ENCODE measurements at regions of chr16 and their contacts with region 1.

Region 1: GRCh38 chr16:17343028-17343427 is 127.7 kb downstream of the XYLT1 start:
- DNase-seq: peak; percentile 89
- H3K4me3 Mint-ChIP-seq: peak overlapping the region; percentile 79
- H3K27ac Mint-ChIP-seq: peak overlapping the region; percentile 91
- H3K4me1 Mint-ChIP-seq: peaks cover 72% of the 10 kb centered on the region
- H3K27me3 Mint-ChIP-seq: no peaks in the 10 kb centered on the region

Region 2: DNA sequence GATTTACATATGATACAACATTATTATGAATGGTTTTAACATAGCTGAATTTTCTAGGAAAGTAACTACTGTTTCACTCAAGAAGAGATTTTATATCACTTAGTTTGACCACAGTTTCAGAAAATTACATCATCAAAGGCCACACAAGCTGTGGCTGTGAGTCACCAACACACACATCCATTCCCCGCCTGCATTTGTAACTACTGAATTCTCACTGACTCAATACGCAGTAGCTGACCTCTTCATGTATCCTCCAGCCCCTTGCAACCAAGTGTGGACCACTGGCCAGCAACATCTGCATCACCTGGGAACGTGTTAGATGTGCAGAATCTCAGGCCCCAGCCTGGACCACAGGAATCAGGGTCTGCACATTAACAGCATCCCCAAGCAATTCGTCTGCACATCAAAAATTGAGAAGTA is 69.9 kb before region 1 on chr16:
- intact Hi-C with region 1: loop called (anchors 5 kb)
- DNase-seq: peak; percentile 74
- H3K4me3 Mint-ChIP-seq: peak overlapping the region; percentile 68
- H3K27ac Mint-ChIP-seq: peak overlapping the region; percentile 71
- H3K4me1 Mint-ChIP-seq: peaks cover 44% of the 10 kb centered on the region
- H3K27me3 Mint-ChIP-seq: peaks cover 5% of the 10 kb centered on the region

Region 3: DNA sequence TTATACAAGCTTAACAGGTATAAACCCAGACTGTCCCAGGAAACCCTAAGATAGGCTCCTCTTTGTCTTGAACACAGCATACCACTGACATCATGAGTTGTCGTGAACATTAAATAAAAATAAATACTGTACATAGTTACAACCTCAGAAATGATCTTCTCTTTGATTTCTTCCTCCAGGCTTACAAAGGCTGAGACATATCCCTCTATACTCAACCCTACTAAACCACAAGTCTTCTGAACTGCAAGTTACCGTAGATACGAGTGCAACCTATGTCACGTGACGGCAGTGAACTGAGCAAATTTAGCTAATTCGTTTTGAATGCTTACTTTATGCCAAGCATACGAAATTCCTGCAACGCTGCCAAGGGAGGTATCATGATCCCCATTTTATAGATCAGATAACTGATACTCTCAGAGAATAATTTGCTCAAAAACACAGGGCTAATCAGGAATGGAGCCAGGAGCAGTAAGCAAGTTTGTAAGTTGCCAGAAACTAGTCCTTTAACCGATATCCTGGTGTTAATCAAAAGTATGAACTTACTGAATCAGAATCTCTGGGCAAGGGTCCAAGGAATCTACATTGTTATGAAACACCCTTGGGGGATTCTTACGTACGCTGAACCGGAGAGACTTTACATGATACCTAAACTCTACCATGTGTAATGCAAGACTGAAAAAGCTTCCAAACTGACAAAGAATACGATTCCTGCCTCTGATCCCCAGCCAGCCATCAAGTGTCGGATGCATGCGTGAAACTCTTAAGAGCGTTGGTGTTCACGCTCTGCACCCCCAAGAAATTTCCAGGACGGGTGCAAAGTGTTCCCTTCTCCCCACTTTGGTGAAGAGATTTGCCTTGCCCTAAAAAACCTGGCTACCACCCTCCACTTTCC is 21.5 kb after region 1 on chr16:
- intact Hi-C with region 1: loop called (anchors 1 kb)
- DNase-seq: peak; percentile 91
- H3K4me3 Mint-ChIP-seq: peak overlapping the region; percentile 64
- H3K27ac Mint-ChIP-seq: peak overlapping the region; percentile 77
- H3K4me1 Mint-ChIP-seq: peaks cover 85% of the 10 kb centered on the region
- H3K27me3 Mint-ChIP-seq: no peaks in the 10 kb centered on the region

Region 4: GRCh38 chr16:17375461-17376304 is 32.7 kb after region 1 on chr16:
- intact Hi-C with region 1: loop called (anchors 2 kb)
- DNase-seq: peak; percentile 52
- H3K4me3 Mint-ChIP-seq: peak overlapping the region; percentile 49
- H3K27ac Mint-ChIP-seq: peak overlapping the region; percentile 37
- H3K4me1 Mint-ChIP-seq: peaks cover 65% of the 10 kb centered on the region
- H3K27me3 Mint-ChIP-seq: no peaks in the 10 kb centered on the region

Region 5: DNA sequence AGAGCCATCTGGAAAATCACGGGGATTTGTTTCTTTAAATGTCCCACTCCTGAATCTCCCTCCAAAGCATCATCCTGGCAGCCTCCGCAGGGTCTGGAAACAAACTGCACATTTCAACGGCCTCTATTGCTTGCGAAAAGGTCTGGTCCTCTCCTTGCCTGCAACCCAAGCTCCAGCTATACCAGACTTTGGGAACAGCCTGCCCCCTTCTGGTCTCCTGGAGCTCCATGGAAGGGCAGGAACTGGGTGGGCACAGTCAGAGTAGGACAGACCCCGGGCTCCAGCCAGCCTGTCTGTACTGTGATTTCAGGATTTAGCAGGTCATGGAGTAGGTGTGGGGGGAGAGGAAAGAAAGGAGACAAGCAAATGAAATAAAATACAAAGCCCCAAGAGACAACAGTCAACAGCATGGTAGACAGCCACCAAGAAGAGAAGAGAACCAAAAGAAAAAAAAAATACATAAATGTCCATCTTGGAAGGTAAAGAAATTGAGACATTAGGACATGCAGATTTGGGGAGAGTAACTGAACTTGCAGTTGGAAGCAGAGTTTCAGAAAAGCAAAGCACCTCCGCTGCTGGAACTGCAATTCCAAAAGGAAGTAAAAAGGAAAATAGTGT is 125.0 kb after region 1 on chr16:
- intact Hi-C with region 1: loop called (anchors 5 kb)
- DNase-seq: peak; percentile 84
- H3K4me3 Mint-ChIP-seq: peak overlapping the region; percentile 89
- H3K27ac Mint-ChIP-seq: no peak overlapping the region
- H3K4me1 Mint-ChIP-seq: peaks cover 53% of the 10 kb centered on the region
- H3K27me3 Mint-ChIP-seq: no peaks in the 10 kb centered on the region

Measured in activated CD4-positive, alpha-beta T cell treated with anti-CD3 and anti-CD28 coated beads, Interleukin-2, amount 10 ng/mL, durations not matched to agents 24 days and 14 days (primary cell).